Sigmoid colon (tissue), 7 donors: ENCODE measurements at regions of chr2 and their contacts with region 1.

Region 1: DNA sequence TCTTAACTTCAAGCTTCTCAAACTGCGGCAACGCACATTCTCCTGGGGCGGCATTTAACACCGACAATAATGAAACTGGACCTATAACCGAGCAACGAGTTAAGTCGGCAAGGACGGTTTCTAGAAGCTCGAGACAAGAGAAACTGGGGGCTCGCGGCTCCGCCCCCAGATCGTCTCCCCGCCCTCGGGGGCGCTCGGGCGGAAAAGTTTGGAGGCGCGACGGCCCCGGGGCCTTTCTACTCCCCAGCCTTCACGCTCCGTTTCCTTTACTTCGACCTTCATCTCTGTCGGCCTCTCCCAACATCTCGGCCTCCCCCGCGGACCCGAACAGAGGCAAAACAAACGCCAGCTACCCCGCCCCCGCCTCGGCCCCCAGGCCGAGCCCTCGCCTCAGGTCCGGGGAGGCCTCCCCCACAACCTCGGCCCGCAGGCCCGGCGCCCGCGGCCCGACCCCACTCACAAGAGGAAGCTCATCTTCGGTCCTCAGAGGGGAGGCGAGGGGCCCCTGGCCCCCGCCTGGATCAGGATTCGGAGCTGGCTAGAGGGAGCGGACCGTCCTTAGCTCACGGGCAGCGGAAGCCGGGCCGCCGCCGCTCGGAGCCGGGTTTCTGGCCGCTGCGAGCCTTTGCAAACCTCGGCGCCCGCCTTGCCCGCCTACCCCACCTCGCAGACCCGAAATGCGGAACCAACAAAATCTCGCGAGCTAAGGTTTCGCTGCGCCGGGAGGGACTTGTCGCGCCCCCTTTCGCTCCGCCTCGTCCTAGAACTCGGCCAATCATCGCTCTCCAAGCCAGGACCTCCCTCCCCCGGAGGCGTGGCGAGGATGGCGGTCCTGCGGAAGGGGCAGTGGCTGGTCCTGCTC is at the start of gene MOB1A:
- DNase-seq: peak; percentile 98
- H3K4me3 ChIP-seq: peak within 1 kb of the TSS; percentile 71 to 98 (median 86)
- H3K27ac ChIP-seq: peak within 1 kb of the TSS; percentile 96 to 99 (median 97)
- H3K4me1 ChIP-seq: peaks cover 0 to 40% (median 35%) of the 10 kb centered on the region in 4 donors
- H3K27me3 ChIP-seq: no peaks in the 10 kb centered on the region
- CTCF ChIP-seq: no peak
- EP300 ChIP-seq: no peak
- POLR2A ChIP-seq: peak; percentile 82 to 87
- total RNA-seq, gene MOB1A: 80.0 to 108 (median 95.6) TPM

Region 2: DNA sequence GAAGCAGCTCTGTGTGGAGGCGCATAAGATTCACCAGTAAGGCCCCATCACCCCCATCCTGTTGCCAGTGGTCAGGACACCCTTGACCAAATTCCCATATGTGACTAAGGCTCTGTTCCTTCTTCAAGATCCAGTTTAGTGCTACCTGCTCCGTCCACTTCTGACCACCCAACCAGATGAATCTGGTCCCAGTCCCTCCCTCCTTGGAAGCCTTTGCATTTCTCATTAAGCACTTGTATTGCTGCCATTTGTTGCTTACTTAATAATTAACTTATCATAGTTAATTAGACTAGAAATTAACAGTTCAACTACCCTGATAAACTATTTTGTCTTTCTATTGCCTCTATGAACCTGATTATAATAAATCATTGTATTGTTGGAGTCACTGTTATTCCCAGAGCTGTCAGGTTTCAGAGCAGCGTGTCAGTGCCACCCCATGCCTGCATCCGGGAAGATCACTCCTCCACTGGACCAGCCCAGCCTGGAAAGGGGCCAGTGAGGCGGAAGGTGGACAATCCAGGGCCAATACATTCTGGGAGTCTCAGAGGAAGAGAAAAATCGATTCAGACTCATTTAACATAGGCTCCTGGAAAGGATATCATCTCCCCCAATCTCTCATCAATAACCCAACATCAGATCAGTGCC is 526.7 kb before region 1 on chr2:
- intact Hi-C with region 1: no loop called
- DNase-seq: no peak
- H3K4me3 ChIP-seq: no peak overlapping the region
- H3K27ac ChIP-seq: no peak overlapping the region
- H3K4me1 ChIP-seq: no peaks in the 10 kb centered on the region
- H3K27me3 ChIP-seq: no peaks in the 10 kb centered on the region
- CTCF ChIP-seq: no peak
- EP300 ChIP-seq: no peak
- POLR2A ChIP-seq: no peak

Region 3: GRCh38 chr2:73985308-73986084 is 192.9 kb before region 1 on chr2:
- intact Hi-C with region 1: no loop called
- DNase-seq: peak; percentile 72
- H3K4me3 ChIP-seq: peak overlapping the region; percentile 41 to 73 (median 63)
- H3K27ac ChIP-seq: peak overlapping the region; percentile 57 to 73 (median 65)
- H3K4me1 ChIP-seq: peaks cover 0 to 62% (median 50%) of the 10 kb centered on the region in 4 donors
- H3K27me3 ChIP-seq: peaks cover 0 to 2% (median 0%) of the 10 kb centered on the region in 3 donors
- CTCF ChIP-seq: no peak
- EP300 ChIP-seq: no peak
- POLR2A ChIP-seq: no peak

Region 4: GRCh38 chr2:74198461-74199274 is 20.2 kb after region 1 on chr2 and contains the start of gene MTHFD2:
- intact Hi-C with region 1: loop called (anchors 2 kb)
- DNase-seq: peak; percentile 91
- H3K4me3 ChIP-seq: peak within 1 kb of the TSS; percentile 50 to 71 (median 64)
- H3K27ac ChIP-seq: peak within 1 kb of the TSS; percentile 72 to 93 (median 90)
- H3K4me1 ChIP-seq: peaks cover 0 to 17% (median 12%) of the 10 kb centered on the region in 4 donors
- H3K27me3 ChIP-seq: no peaks in the 10 kb centered on the region
- CTCF ChIP-seq: peak; percentile 43 to 78 (median 58)
- EP300 ChIP-seq: no peak
- POLR2A ChIP-seq: peak; percentile 33 to 48
- total RNA-seq, gene MTHFD2: 12.7 to 26.2 (median 19.7) TPM